Astrocyte of the cerebellum (primary cell): ENCODE measurements at regions of chr15 and their contacts with region 1.

Region 1: DNA sequence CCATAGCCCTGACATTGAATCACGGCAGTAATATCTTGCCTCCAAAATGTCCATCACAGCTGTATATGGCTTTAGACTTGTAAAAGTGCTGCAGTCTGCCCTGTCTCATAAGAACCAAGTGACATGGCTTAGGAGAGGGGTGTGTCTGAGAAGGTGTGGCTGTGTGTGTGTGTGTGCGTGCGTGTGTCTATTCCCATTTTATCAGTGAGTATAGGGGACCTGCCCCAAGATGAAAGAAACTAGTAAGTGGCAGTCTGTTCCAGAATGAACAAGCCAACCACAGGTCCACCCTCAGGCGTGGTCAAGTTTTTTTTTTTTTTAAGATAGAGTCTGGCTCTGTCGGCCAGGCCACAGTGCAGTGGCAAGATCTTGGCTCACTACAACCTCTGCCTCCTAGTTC is 5.6 kb upstream of the RHOV start:
- DNase-seq: no peak
- H3K4me3 ChIP-seq: no peak overlapping the region
- CTCF ChIP-seq: no peak

Region 2: DNA sequence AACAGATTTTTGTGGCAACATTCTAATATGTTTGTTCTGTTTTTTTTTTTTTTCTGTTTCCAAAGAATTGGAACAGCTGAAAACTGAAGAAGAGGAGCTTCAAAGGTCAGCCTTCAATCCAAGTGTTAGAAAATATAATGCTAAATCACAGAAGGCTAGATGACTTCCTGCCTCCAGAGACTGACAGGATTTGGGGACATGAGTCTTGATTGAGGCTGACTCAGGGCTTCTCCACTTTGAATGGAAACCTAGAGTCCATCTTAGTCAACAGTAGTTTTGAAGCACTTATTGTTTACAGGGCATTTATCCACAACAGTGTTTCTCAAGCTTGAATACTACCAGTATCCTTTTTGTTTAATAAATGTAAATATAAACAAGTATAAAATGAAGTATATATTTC is 229.1 kb before region 1 on chr15:
- in situ Hi-C with region 1: loop called (anchors 10 kb)
- DNase-seq: no peak
- H3K4me3 ChIP-seq: no peak overlapping the region
- CTCF ChIP-seq: no peak

Region 3: DNA sequence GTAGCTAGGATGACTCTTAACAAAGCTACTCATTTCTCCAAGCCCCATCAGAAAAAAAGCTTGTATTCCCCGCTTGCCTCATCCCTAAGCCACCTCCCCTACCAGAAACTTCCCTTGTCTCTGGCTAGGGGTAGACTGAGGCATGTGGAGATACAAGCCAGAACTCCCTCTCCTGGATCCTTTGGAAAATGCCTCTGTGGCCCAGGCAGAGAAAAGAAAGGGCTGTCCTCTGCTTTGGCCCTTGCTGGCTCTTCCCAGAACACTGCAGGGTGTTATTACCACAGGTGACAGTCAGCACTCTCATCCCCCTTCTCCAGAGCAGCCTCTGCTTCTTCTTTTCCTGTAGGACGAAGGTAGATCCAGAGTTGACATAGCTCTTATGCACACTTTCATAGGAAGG is 139.8 kb before region 1 on chr15:
- in situ Hi-C with region 1: loop called (anchors 10 kb)
- DNase-seq: no peak
- H3K4me3 ChIP-seq: no peak overlapping the region
- CTCF ChIP-seq: no peak

Region 4: GRCh38 chr15:40968290-40969085 is 88.9 kb after region 1 on chr15:
- in situ Hi-C with region 1: no loop called
- DNase-seq: no peak
- H3K4me3 ChIP-seq: no peak overlapping the region
- CTCF ChIP-seq: no peak